CD14-positive monocyte (primary cell): ENCODE measurements at regions of chr10 and their contacts with region 1.

Region 1: DNA sequence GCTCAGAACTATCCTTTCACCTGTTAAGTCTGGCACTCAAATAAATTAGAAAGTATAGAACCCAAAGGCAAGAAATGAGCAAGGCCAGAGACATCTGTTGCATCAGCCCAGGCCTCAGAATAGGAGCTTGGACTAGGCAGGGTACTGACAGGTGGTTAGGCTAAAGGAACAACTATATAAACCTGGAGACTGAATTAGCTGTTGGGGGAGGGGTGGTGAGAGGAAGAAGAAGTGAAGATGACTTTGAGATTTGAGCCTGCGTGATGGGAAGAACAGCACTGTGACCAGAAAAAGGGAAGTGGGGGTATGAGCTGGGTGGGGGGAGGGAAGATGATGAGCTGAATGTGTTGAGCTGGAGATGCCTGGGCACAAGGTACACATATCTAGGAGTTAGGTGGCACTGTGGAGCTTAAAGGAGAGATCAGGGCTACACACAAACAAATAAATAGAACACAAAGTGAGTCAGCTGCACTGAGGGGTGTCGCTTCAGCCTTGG is 244.7 kb downstream of the PTEN start:
- DNase-seq: peak; percentile 85 to 97 (median 87)
- H3K4me3 ChIP-seq: peak overlapping the region in 1 of 3 experiments; percentile 40
- H3K4me3 Mint-ChIP-seq: peak overlapping the region in 1 of 2 donors; percentile 76
- H3K27ac ChIP-seq: peak overlapping the region; percentile 59 to 82
- H3K27ac Mint-ChIP-seq: peak overlapping the region; percentile 85 to 94 (median 89)
- H3K4me1 ChIP-seq: peaks cover 64 to 66% of the 10 kb centered on the region in 2 donors
- H3K4me1 Mint-ChIP-seq: peaks cover 74% of the 10 kb centered on the region
- H3K27me3 ChIP-seq: no peaks in the 10 kb centered on the region
- H3K27me3 Mint-ChIP-seq: peaks cover 0 to 1% (median 0%) of the 10 kb centered on the region in 3 donors
- CTCF ChIP-seq: peak; percentile 40

Region 2: GRCh38 chr10:88064608-88065382 is 43.4 kb before region 1 on chr10:
- intact Hi-C with region 1: loop called in 1 of 2 experiments (anchors 5 kb)
- DNase-seq: peak; percentile 80 to 85 (median 85)
- H3K4me3 ChIP-seq: peak overlapping the region in 1 of 3 experiments; percentile 63
- H3K4me3 Mint-ChIP-seq: peak overlapping the region in 1 of 2 donors; percentile 74
- H3K27ac ChIP-seq: peak overlapping the region; percentile 69 to 91
- H3K27ac Mint-ChIP-seq: peak overlapping the region; percentile 92 to 98 (median 97)
- H3K4me1 ChIP-seq: peaks cover 87 to 89% of the 10 kb centered on the region in 2 donors
- H3K4me1 Mint-ChIP-seq: peaks cover 91% of the 10 kb centered on the region
- H3K27me3 ChIP-seq: no peaks in the 10 kb centered on the region
- H3K27me3 Mint-ChIP-seq: peaks cover 0 to 3% (median 0%) of the 10 kb centered on the region in 3 donors
- CTCF ChIP-seq: no peak

Region 3: GRCh38 chr10:88070080-88070880 is 37.9 kb before region 1 on chr10:
- intact Hi-C with region 1: loop called (anchors 5 kb)
- DNase-seq: peak in 2 of 3 donors; percentile 45 to 68
- H3K4me3 ChIP-seq: peak overlapping the region in 1 of 3 experiments; percentile 5
- H3K4me3 Mint-ChIP-seq: no peak overlapping the region
- H3K27ac ChIP-seq: peak overlapping the region in 1 of 2 donors; percentile 81
- H3K27ac Mint-ChIP-seq: peak overlapping the region in 6 of 7 donors; percentile 42 to 79 (median 65)
- H3K4me1 ChIP-seq: peaks cover 71 to 72% of the 10 kb centered on the region in 2 donors
- H3K4me1 Mint-ChIP-seq: peaks cover 66% of the 10 kb centered on the region
- H3K27me3 ChIP-seq: no peaks in the 10 kb centered on the region
- H3K27me3 Mint-ChIP-seq: no peaks in the 10 kb centered on the region
- CTCF ChIP-seq: no peak